IMR-90 (cell line): ENCODE measurements at regions of chr1 and their contacts with region 1.

Region 1: GRCh38 chr1:202952818-202953217 is 5.3 kb downstream of the ADIPOR1 start:
- DNase-seq: peak; percentile 53
- ATAC-seq: peak; percentile 40
- H3K4me3 ChIP-seq: no peak overlapping the region
- H3K27ac ChIP-seq: no peak overlapping the region
- H3K4me1 ChIP-seq: no peaks in the 10 kb centered on the region
- H3K27me3 ChIP-seq: no peaks in the 10 kb centered on the region
- CTCF ChIP-seq: no peak
- POLR2A ChIP-seq: no peak
- RAD21 ChIP-seq: no peak

Region 2: GRCh38 chr1:202834771-202835547 is 117.9 kb before region 1 on chr1:
- CTCF ChIA-PET with region 1: no interaction called
- POLR2A ChIA-PET with region 1: no interaction called
- dilution Hi-C with region 1: no loop called
- in situ Hi-C with region 1: no loop called
- intact Hi-C with region 1: no loop called
- DNase-seq: no peak
- ATAC-seq: no peak
- H3K4me3 ChIP-seq: no peak overlapping the region
- H3K27ac ChIP-seq: no peak overlapping the region
- H3K4me1 ChIP-seq: no peaks in the 10 kb centered on the region
- H3K27me3 ChIP-seq: peaks cover 45% of the 10 kb centered on the region
- CTCF ChIP-seq: no peak
- POLR2A ChIP-seq: no peak
- RAD21 ChIP-seq: no peak

Region 3: DNA sequence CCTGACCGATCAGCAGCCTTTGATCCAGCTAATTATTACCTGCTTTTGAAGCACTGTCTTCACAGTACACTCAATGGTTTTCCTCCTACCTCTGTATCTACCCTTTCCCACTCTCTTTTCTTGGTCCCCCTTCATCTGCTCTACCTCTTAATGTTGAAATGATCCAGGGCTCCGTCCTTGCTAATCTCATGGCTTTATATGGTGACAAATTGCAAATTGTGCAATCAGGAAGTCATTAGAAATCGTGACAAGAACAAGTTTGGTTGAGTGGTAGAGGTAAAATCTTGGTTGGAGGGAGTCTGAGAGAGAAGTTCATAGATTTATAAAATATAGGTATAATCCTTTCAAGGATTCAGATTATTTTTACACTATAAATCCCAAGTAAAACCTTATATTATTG is 23.8 kb after region 1 on chr1:
- CTCF ChIA-PET with region 1: no interaction called
- POLR2A ChIA-PET with region 1: no interaction called
- dilution Hi-C with region 1: no loop called
- in situ Hi-C with region 1: no loop called
- intact Hi-C with region 1: loop called (anchors 1 kb)
- DNase-seq: no peak
- ATAC-seq: no peak
- H3K4me3 ChIP-seq: no peak overlapping the region
- H3K27ac ChIP-seq: no peak overlapping the region
- H3K4me1 ChIP-seq: no peaks in the 10 kb centered on the region
- H3K27me3 ChIP-seq: peaks cover 47% of the 10 kb centered on the region
- CTCF ChIP-seq: no peak
- POLR2A ChIP-seq: no peak
- RAD21 ChIP-seq: no peak